ENCODE measurements at regions of chr4 and their contacts with region 1.

Region 1: DNA sequence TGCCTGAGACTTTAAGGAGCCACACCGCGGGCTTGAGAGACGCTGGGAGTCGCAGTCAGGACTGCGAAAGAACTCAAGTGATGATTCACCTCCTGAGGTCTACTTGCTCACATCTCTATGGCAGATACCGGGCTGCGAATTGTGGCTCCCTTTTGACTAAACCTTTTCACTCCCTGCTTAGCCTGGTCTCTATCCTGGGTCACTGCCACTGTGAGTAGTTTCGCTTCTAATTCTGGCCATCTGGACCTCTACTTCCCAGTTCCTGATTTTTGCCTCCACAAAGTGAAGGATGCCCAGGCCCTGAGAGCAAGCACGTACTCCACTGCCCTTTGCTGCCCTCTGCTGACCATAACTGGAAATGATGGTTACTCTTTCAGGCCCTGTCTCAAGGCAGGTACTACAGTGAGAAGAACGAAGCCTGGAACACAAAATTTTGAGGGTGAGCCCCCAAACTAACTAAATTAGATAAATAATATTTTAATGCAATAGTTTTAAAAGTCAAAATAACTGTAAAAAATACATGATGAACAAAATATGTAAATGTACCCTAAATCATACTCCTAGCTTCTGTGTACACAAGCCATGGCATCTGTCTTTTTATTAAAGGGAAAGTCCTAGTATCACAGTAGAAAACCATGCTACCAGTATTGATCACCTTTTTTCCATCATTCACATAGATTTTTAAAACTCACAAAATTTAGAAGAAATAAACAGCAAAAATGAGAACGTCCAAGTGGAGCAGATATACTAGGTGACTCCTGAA is 16.7 kb downstream of the MAD2L1 start:
- DNase-seq: peak; percentile 71 to 74
- H3K4me3 ChIP-seq: peak overlapping the region; percentile 25 to 57 (median 41)
- H3K27ac ChIP-seq: peak overlapping the region; percentile 42 to 66
- H3K4me1 ChIP-seq: no peaks in the 10 kb centered on the region
- H3K27me3 ChIP-seq: no peaks in the 10 kb centered on the region
- CTCF ChIP-seq: peak; percentile 76 to 82 (median 77)
- POLR2A ChIP-seq: no peak

Region 2: GRCh38 chr4:119314356-119314755 is 735.6 kb before region 1 on chr4:
- intact Hi-C with region 1: loop called (anchors 5 kb)
- DNase-seq: no peak
- H3K4me3 ChIP-seq: no peak overlapping the region
- H3K27ac ChIP-seq: no peak overlapping the region
- H3K4me1 ChIP-seq: no peaks in the 10 kb centered on the region
- H3K27me3 ChIP-seq: no peaks in the 10 kb centered on the region
- CTCF ChIP-seq: peak in 2 of 3 donors; percentile 25 to 33
- POLR2A ChIP-seq: no peak

Measured in breast epithelium (tissue), 4 donors.